Heart right ventricle (tissue), 16 donors: ENCODE measurements at regions of chr9 and their contacts with region 1.

Region 1: DNA sequence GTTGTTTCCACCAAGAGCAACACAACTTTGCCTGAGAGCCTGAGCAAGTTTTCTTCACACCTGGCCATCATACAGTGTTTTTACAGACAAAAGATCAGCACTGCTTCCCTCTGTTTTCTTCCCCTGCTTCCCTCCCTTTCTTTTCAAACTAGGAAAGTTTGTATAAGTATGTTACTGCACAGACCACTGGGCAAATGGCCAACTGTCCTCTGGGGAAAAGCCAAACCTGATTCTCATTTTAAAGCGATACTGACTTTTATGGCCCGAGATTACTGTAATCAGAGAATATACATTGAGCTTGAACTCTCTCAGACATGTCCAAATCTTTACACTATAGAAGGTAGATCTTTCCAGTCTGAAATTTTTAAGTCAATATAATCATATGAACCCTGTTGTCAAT is 415.0 kb downstream of the NFIB start:
- DNase-seq: peak in 1 of 2 donors; percentile 26
- ATAC-seq: no peak
- H3K4me3 ChIP-seq: no peak overlapping the region
- H3K27ac ChIP-seq: peak overlapping the region in 9 of 10 donors; percentile 37 to 86 (median 70)
- H3K4me1 ChIP-seq: peaks cover 0 to 64% (median 41%) of the 10 kb centered on the region in 9 donors
- H3K27me3 ChIP-seq: no peaks in the 10 kb centered on the region
- CTCF ChIP-seq: no peak

Region 2: DNA sequence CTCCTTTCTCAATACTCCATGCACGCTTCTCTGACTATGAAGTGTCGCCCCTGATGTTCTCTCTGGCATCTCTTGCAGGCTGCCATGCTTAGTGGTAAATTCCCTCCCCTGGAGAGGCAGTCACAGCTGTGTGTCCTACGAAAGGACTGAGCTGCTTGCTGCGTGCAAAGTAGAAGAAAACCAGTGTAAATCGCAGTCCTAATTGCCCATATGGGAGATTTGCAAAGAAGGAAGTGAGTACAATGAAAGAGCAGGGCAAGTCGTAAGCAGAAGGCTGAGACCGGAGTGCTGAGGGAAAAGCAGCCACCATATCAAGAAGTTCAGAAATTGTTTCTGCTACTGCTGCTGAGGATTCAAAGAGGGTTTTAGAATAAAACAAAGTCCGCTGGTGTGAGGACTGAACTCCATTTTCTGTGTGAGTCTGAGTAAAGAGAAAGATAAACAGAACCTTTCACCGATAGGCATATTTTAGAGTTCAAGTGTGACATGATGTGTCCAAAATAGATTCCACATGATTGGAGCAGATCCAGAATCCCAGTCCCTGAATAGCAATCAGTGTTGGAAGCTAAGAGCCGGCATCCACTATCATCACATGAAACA is 111.6 kb before region 1 on chr9:
- intact Hi-C with region 1: loop called in 1 of 10 experiments (anchors 10 kb)
- DNase-seq: peak in 1 of 2 donors; percentile 82
- ATAC-seq: peak; percentile 84 to 95 (median 90)
- H3K4me3 ChIP-seq: peak overlapping the region in 8 of 10 donors; percentile 2 to 41 (median 26)
- H3K27ac ChIP-seq: peak overlapping the region; percentile 80 to 95 (median 87)
- H3K4me1 ChIP-seq: peaks cover 5 to 34% (median 26%) of the 10 kb centered on the region in 9 donors
- H3K27me3 ChIP-seq: no peaks in the 10 kb centered on the region
- CTCF ChIP-seq: no peak

Region 3: DNA sequence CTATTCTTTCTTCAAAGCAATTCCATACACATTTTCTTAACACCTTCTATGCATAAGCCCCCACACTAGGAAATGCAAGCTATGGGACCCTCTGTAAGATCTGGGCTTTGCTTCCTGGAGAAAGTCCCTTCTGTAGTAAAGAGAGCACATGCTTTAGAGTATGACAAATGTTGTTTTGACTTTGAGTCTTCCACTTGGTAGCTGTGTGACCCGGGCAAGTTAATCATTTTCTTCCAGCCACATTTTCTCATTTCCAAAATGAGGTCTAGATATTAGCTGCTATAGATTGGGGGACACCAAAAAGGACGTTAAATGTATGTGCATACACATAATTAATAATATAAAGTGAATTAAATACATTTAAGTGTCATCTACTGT is 81.0 kb after region 1 on chr9:
- intact Hi-C with region 1: no loop called
- DNase-seq: no peak
- ATAC-seq: no peak
- H3K4me3 ChIP-seq: no peak overlapping the region
- H3K27ac ChIP-seq: no peak overlapping the region
- H3K4me1 ChIP-seq: peaks cover 0 to 7% (median 0%) of the 10 kb centered on the region in 9 donors
- H3K27me3 ChIP-seq: no peaks in the 10 kb centered on the region
- CTCF ChIP-seq: no peak